AG04450 (cell line): ENCODE measurements at regions of chr16 and their contacts with region 1.

Region 1: GRCh38 chr16:46673320-46674013 is 15.5 kb downstream of the VPS35 start:
- DNase-seq: no peak
- H3K4me3 ChIP-seq: no peak overlapping the region
- H3K27ac ChIP-seq: no peak overlapping the region
- H3K27me3 ChIP-seq: no peaks in the 10 kb centered on the region
- CTCF ChIP-seq: peak; percentile 97

Region 2: DNA sequence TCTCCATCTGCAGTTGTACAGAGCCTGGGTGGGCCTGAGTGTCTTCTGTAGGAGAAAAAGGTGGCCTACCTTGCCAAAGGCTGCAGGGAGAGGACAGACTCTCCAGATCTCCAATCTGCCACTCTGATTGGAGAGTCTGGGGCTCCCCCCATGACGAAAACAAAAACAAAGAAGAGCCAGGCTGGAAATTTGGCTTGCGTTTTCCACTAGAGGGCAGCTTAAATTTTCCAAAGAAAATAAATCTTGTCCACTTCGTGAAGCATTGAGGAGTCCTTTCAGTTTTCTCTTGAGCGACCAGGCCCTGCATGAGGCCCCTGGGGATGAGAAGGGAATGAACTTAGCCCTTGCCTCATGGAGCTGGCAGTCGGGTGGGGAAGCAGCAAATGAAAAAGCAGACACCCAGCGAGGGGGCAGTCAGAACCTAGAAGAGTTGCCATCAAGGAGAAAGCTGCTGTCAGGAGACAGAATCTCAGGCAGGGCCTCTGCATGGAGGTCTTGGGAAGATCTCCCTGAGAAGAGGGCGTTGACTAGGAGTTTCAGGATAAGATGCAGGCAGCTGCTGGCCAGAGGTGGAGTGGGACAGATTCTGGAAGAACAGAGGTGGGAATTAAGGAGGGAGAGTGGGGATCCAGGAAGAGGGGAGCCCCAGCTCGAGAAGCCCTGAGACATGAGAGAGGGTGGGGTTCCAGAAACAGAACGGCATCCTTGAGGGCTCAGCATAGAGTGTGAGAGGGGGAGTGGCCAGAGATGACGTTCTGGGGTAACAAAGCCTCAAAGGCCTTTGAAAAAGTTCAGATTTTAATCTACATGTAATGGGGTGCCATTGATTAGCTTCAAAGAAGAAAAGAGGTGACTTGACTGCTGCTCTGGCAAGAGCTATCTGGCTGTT is 43.9 kb before region 1 on chr16:
- CTCF ChIA-PET with region 1: interaction called, 13 read pairs
- POLR2A ChIA-PET with region 1: no interaction called
- DNase-seq: no peak
- H3K4me3 ChIP-seq: peak overlapping the region; percentile 18; the same call in 1 of the 2 replicates
- H3K27ac ChIP-seq: peak overlapping the region; percentile 43
- H3K27me3 ChIP-seq: peaks cover 3% of the 10 kb centered on the region
- CTCF ChIP-seq: peak; percentile 63

Region 3: DNA sequence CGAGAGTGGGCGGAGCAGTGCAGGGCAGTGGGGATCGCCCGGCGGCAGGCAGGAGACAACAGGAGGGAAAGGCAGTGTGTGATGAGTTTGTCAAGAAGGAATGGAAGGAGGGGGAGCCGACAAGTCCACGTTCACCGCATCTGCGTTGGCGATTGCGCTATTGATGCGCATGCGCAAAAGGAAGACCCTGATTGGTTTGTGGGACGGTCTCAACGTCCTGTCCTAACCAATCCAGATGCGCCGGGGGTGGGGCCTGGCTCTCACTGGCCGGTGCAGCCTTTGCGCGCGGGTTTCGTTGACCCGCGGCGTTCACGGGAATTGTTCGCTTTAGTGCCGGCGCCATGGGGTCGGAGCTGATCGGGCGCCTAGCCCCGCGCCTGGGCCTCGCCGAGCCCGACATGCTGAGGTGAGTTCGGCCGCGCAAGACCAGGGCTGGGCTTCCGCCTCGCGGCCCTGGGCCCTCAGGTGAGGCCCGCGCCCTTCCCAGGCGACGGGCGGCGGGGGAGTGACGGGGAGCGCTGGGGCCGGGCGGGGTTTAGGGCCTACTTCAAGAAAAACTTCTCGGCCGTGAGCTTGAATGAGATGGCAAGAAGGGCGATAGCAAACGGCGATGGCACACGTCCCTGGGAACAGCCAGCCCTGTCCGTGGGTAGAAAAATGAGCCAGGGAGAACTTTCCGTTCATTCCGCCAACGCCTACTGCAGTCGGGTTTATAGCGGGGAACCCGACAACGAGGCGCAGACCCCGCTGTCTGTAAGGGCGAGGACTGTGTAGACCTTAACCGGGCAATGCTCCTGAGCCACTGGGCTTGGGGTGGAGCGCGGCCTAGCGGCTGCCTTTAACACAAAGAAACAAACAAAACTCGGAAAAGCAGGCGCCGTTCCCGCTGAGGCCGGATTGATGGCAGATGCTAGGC is 16.2 kb after region 1 on chr16 and contains the start of gene ORC6:
- CTCF ChIA-PET with region 1: interaction called, 49 read pairs
- POLR2A ChIA-PET with region 1: no interaction called
- DNase-seq: peak; percentile 89
- H3K4me3 ChIP-seq: peak within 1 kb of the TSS; percentile 94
- H3K27ac ChIP-seq: peak within 1 kb of the TSS; percentile 95
- H3K27me3 ChIP-seq: no peaks in the 10 kb centered on the region
- CTCF ChIP-seq: peak; percentile 69
- polyA plus RNA-seq, gene ORC6: 4.2 and 6.6 TPM in 2 replicates

Region 4: GRCh38 chr16:46801428-46802049 is 128.1 kb after region 1 on chr16:
- CTCF ChIA-PET with region 1: interaction called, 76 read pairs
- POLR2A ChIA-PET with region 1: no interaction called
- DNase-seq: no peak
- H3K4me3 ChIP-seq: no peak overlapping the region
- H3K27ac ChIP-seq: no peak overlapping the region
- H3K27me3 ChIP-seq: no peaks in the 10 kb centered on the region
- CTCF ChIP-seq: peak; percentile 56

Region 5: DNA sequence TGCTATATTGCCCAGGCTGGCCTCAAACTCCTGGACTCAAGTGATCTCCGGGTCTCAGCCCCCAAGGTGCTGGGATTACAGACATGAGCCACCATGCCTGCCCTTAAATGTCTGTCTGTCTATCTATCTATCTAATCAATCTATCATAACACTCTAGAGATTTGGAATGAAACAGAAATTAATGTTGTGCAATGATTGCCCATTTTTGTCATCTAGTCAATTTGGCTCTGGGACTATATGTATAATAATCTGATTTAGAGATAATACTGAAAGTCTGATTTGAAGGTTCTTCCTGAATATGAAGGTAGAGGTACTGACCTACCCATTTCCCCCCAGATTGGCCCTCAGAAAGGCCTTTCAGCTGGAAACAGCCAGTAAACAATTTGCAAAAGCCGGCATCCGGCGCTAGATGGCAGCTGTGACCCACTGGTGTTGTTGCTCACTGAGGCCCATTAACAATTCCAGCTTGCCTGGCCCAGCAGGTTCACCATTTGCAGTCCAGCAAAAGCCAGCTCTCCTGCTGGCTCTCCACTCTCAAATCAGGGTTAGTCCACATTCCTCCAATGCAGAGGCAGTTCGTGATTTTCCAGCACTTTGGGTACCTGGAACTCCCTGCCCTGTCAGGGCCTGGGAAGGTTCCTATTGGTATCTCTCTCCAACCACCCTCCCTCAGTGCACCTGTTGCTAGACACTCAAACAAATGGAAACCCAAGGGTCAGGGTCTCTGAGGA is 180.4 kb after region 1 on chr16:
- CTCF ChIA-PET with region 1: interaction called, 22 read pairs
- POLR2A ChIA-PET with region 1: no interaction called
- DNase-seq: peak; percentile 36
- H3K4me3 ChIP-seq: no peak overlapping the region
- H3K27ac ChIP-seq: no peak overlapping the region
- H3K27me3 ChIP-seq: peaks cover 4% of the 10 kb centered on the region
- CTCF ChIP-seq: peak; percentile 93

Region 6: DNA sequence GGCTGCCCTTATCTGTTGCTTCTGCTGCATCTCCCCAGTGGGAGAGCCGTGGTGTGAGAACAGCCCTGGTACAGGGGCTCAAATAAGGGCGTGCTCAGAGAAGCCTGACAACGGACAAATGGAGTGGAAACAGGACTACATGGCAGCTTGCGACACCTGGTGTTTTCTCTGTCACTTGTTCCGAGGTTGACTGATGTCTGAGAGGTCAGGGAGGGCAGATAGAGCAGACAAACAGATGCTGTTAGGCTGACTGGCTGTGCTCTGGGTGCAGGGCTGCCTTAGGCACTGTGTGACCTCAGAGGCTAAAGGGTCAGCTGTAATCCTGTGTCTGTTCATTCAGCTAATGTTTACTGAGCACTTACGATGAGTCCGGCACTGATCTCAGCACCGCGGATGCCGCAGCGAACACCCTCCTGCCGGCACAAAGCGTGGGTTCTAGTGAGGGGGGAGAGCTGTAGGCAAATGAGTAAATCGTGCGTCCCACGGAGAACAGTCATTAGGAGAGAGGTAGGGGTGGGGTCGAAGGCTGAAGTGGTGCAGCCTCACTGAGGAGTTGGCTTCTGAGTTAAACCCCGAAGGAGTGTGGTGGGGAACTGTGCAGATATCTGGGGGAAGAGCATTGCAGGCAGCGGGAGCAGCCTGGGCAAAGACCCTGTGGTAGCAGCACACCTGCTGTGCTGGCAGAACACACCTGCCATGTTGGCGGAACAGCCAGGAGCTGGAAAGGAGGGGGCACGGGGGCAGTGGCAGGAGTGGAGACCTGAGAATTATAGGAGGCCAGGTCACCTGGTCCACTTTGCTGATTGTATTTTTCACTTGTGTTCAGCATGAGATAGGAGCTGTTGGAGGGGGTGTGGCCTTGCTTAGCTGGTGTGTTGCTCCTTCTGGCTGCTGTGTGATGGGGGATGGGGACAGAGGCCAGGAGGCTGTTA is 245.7 kb after region 1 on chr16:
- CTCF ChIA-PET with region 1: interaction called, 11 read pairs
- POLR2A ChIA-PET with region 1: no interaction called
- DNase-seq: no peak
- H3K4me3 ChIP-seq: no peak overlapping the region
- H3K27ac ChIP-seq: no peak overlapping the region
- H3K27me3 ChIP-seq: no peaks in the 10 kb centered on the region
- CTCF ChIP-seq: no peak